H1 (cell line): ENCODE measurements at regions of chr3 and their contacts with region 1.

Region 1: GRCh38 chr3:14467814-14468620 is 65.6 kb downstream of the SLC6A6 start:
- DNase-seq: peak in 1 of 2 experiments; percentile 72
- H3K4me3 ChIP-seq: no peak overlapping the region
- H3K27ac ChIP-seq: 0 out of 2 replicates have a peak overlapping the region, but pooled peaks have one; percentile 3
- H3K4me1 ChIP-seq: peaks cover 0 to 2% (median under 1%) of the 10 kb centered on the region in 4 experiments; a peak in 4 of 7 replicates
- H3K27me3 ChIP-seq: no peaks in the 10 kb centered on the region
- CTCF ChIP-seq: peak in 2 of 3 experiments; percentile 85; a peak in 3 of 4 replicates
- EP300 ChIP-seq: no peak
- POLR2A ChIP-seq: no peak
- RAD21 ChIP-seq: peak; percentile 88 to 94

Region 2: DNA sequence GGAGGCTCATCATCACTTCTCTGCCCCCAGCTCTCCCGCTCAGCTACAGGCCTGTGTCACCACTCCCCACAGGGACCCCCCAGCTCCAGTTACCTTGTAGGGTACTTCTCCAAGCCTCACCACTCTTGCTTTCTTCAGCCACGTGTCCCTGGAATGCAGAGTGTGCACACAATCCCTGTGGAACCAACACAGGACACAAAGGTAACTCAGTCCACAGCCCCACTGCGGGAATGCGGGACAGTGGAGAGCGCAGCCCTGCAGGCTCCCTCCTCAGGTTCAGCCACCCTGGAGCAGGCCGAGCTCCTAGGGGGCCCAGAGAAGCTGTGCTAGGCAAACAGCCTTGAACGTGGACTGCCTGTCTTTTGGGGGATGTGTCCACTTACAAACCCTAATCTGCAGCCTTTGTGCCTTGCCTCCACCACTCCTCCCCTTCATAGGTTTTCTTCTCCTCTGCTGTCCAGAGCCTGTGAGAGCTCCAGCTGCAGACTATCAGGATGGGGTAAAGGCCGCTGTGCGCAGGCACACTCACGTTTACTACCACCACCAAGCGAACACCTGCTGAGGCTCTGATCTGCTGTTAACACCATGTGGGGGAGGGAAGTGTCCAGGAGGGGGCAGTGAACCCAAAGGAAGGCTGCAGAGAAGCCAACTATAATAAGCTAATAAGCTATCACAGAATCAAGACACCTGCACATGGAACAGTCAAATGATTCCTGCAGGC is 315.6 kb before region 1 on chr3:
- CTCF ChIA-PET with region 1: no interaction called
- POLR2A ChIA-PET with region 1: no interaction called
- DNase-seq: no peak
- H3K4me3 ChIP-seq: no peak overlapping the region
- H3K27ac ChIP-seq: no peak overlapping the region
- H3K4me1 ChIP-seq: peaks cover 0 to 14% (median 9%) of the 10 kb centered on the region in 4 experiments; a peak in 6 of 7 replicates
- H3K27me3 ChIP-seq: no peaks in the 10 kb centered on the region
- CTCF ChIP-seq: peak; percentile 17 to 33 (median 27); a peak in 2 of 4 replicates
- EP300 ChIP-seq: no peak
- POLR2A ChIP-seq: no peak
- RAD21 ChIP-seq: peak in 1 of 2 experiments; percentile 33; a peak in 2 of 4 replicates

Region 3: GRCh38 chr3:14261229-14261628 is 206.8 kb before region 1 on chr3:
- CTCF ChIA-PET with region 1: interaction called, 49 read pairs
- POLR2A ChIA-PET with region 1: no interaction called
- DNase-seq: peak in 1 of 2 experiments; percentile 97
- H3K4me3 ChIP-seq: no peak overlapping the region
- H3K27ac ChIP-seq: no peak overlapping the region
- H3K4me1 ChIP-seq: peaks cover 0 to 7% (median 0%) of the 10 kb centered on the region in 4 experiments; a peak in 1 of 7 replicates
- H3K27me3 ChIP-seq: 0 out of 7 replicates have a peak, but pooled peaks cover 0 to 3% (median 0%) of the 10 kb centered on the region in 4 experiments
- CTCF ChIP-seq: peak; percentile 95
- EP300 ChIP-seq: no peak
- POLR2A ChIP-seq: no peak
- RAD21 ChIP-seq: peak; percentile 99

Region 4: DNA sequence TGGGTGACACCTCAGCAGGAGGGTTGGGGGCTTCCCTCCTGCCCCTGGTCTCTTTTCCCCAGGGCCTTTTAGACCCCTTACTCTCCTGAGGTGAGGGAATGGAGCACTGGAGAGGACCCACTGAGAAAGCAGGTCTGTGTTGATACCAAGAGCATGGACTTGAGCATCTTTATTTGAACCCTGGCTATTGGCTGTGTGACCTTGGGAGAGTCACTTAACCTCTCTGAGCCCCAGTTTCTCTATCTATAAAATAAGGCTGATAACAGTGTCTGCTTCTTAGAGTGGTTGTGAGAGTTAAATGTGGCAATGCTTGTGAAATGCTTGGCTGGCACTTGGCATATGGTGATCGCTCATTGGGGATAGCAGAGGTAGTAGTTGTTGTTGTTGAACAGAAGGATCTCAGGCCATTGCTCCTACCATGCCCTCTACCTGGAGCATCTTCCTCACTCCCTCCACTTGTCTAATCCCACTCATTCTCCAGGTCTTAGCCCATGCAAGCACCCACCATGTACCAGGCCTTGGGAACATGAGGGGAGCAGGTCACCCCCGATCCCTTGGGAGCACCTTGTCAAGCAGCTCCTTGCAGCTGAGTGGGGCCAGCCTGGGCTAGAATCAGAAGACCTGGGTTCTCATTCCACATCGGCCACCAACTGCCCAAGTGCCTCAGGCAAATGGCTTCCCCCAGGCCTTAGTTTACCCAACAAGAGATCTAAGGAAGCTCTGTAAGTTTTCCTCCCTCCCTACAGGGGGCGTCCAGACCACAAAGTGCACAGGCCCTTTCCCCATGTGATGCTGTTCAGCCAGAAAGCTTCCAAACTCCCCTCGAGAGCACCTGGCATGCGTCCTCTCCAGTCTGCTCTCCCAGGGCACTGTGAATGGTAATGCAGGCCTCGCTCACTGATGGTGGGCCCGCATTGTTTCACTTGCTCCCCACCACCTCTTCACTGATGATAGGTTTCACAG is 192.7 kb before region 1 on chr3:
- CTCF ChIA-PET with region 1: interaction called, 19 read pairs
- POLR2A ChIA-PET with region 1: no interaction called
- DNase-seq: no peak
- H3K4me3 ChIP-seq: no peak overlapping the region
- H3K27ac ChIP-seq: no peak overlapping the region
- H3K4me1 ChIP-seq: peaks cover 4 to 31% (median 22%) of the 10 kb centered on the region in 4 experiments
- H3K27me3 ChIP-seq: no peaks in the 10 kb centered on the region; a peak in 1 of 7 replicates
- CTCF ChIP-seq: peak; percentile 54 to 74 (median 67)
- EP300 ChIP-seq: no peak
- POLR2A ChIP-seq: no peak
- RAD21 ChIP-seq: peak; percentile 70 to 82

Region 5: GRCh38 chr3:14391033-14391432 is 77.0 kb before region 1 on chr3:
- CTCF ChIA-PET with region 1: interaction called, 11 read pairs
- POLR2A ChIA-PET with region 1: interaction called, 3 read pairs
- DNase-seq: no peak
- H3K4me3 ChIP-seq: no peak overlapping the region
- H3K27ac ChIP-seq: no peak overlapping the region
- H3K4me1 ChIP-seq: peaks cover 0 to 5% (median 3%) of the 10 kb centered on the region in 4 experiments; a peak in 6 of 7 replicates
- H3K27me3 ChIP-seq: no peaks in the 10 kb centered on the region
- CTCF ChIP-seq: no peak
- EP300 ChIP-seq: no peak
- POLR2A ChIP-seq: no peak
- RAD21 ChIP-seq: no peak

Region 6: GRCh38 chr3:14452679-14453367 is 15.2 kb before region 1 on chr3:
- CTCF ChIA-PET with region 1: interaction called, 29 read pairs
- POLR2A ChIA-PET with region 1: interaction called, 3 read pairs
- DNase-seq: no peak
- H3K4me3 ChIP-seq: no peak overlapping the region
- H3K27ac ChIP-seq: no peak overlapping the region
- H3K4me1 ChIP-seq: peaks cover 1 to 2% (median 1%) of the 10 kb centered on the region in 4 experiments; a peak in 5 of 7 replicates
- H3K27me3 ChIP-seq: no peaks in the 10 kb centered on the region; a peak in 1 of 7 replicates
- CTCF ChIP-seq: no peak
- EP300 ChIP-seq: no peak
- POLR2A ChIP-seq: no peak
- RAD21 ChIP-seq: no peak

Region 7: DNA sequence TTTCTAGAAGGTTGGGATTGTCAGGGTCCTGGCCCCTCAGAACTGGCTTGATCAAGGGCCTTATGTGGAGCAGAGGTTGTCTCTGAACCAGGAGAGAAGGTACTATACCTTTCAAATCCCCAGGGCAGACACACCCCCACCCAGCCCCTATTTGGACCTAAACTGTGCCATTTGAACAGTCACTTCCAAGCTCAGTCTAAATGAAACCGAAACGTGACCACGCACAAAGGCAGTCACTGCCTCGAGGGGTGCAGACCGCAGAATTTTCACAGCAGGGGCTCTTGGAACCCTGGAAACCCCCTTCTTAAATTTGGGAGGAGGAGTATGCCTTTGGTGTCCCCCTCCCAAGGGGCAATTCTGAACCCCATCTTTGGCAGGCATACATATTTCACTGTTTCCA is 18.4 kb after region 1 on chr3:
- CTCF ChIA-PET with region 1: interaction called, 23 read pairs
- POLR2A ChIA-PET with region 1: no interaction called
- DNase-seq: no peak
- H3K4me3 ChIP-seq: no peak overlapping the region
- H3K27ac ChIP-seq: no peak overlapping the region
- H3K4me1 ChIP-seq: peaks cover 0 to 7% (median 2%) of the 10 kb centered on the region in 4 experiments; a peak in 5 of 7 replicates
- H3K27me3 ChIP-seq: no peaks in the 10 kb centered on the region
- CTCF ChIP-seq: no peak
- EP300 ChIP-seq: no peak
- POLR2A ChIP-seq: no peak
- RAD21 ChIP-seq: no peak